ENCODE measurements at regions of chr9 and their contacts with region 1.

Region 1: DNA sequence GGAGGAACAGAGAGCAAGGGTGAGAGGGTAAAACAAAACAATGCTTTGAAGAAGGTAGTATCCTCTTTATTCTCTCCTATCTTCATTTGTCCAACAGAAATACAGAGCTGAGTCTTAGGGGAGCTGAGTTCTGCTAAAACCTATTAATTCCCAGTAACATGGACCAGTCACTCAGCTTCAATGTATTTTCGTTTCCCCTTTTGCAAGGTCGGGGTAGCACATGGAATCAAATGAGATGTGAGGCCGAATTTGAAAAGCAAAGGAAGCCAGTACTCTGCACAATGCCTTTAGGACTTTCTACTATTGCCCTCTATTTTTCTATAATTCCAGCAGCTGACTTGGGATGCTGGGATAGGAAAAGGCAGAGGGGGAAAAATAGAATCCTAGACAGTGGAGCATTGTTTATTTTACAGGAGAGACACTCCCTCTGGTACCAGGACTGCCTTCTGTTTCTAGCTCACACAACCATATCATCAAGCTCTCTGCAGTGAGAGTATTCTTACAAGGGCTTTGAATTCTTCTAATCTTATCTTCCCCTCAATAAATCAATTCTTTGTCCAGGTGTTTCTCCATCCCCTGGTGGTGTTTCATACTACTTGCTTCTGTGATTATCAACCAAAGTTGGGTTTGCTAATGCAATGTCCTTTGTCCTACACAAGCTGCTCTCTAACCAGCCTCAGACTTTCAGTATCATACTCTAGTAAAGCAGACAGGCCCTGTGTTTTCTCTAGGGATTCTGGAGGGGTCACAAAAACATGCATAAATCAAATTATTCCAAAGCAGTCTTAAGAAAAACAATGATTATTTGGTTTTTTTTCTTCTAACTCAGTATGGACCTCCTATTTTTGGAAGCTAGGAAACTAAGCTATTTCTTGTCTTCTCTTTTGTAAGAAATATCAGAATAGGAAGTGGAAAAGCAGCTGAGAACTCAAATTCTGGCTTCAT is 341.5 kb downstream of the OSTF1 start:
- DNase-seq: no peak
- H3K4me3 ChIP-seq: no peak overlapping the region
- H3K4me3 Mint-ChIP-seq: no peak overlapping the region
- H3K27ac ChIP-seq: no peak overlapping the region
- H3K27ac Mint-ChIP-seq: no peak overlapping the region
- H3K4me1 ChIP-seq: no peaks in the 10 kb centered on the region
- H3K4me1 Mint-ChIP-seq: no peaks in the 10 kb centered on the region
- H3K27me3 ChIP-seq: no peaks in the 10 kb centered on the region
- H3K27me3 Mint-ChIP-seq: peaks cover 1 to 6% (median 2%) of the 10 kb centered on the region in 3 donors
- CTCF ChIP-seq: no peak

Region 2: GRCh38 chr9:75389101-75389500 is 40.7 kb before region 1 on chr9:
- intact Hi-C with region 1: no loop called
- DNase-seq: no peak
- H3K4me3 ChIP-seq: no peak overlapping the region
- H3K4me3 Mint-ChIP-seq: no peak overlapping the region
- H3K27ac ChIP-seq: no peak overlapping the region
- H3K27ac Mint-ChIP-seq: no peak overlapping the region
- H3K4me1 ChIP-seq: no peaks in the 10 kb centered on the region
- H3K4me1 Mint-ChIP-seq: no peaks in the 10 kb centered on the region
- H3K27me3 ChIP-seq: no peaks in the 10 kb centered on the region
- H3K27me3 Mint-ChIP-seq: peaks cover 0 to 1% (median 0%) of the 10 kb centered on the region in 3 donors
- CTCF ChIP-seq: no peak

Region 3: GRCh38 chr9:75487856-75488718 is 58.3 kb after region 1 on chr9:
- intact Hi-C with region 1: loop called in 1 of 2 experiments (anchors 10 kb)
- DNase-seq: no peak
- H3K4me3 ChIP-seq: no peak overlapping the region
- H3K4me3 Mint-ChIP-seq: no peak overlapping the region
- H3K27ac ChIP-seq: no peak overlapping the region
- H3K27ac Mint-ChIP-seq: no peak overlapping the region
- H3K4me1 ChIP-seq: no peaks in the 10 kb centered on the region
- H3K4me1 Mint-ChIP-seq: no peaks in the 10 kb centered on the region
- H3K27me3 ChIP-seq: no peaks in the 10 kb centered on the region
- H3K27me3 Mint-ChIP-seq: peaks cover 0 to 2% (median 2%) of the 10 kb centered on the region in 3 donors
- CTCF ChIP-seq: no peak

Measured in CD14-positive monocyte (primary cell).